Caco-2 (cell line): ENCODE measurements at regions of chr4 and their contacts with region 1.

Region 1: DNA sequence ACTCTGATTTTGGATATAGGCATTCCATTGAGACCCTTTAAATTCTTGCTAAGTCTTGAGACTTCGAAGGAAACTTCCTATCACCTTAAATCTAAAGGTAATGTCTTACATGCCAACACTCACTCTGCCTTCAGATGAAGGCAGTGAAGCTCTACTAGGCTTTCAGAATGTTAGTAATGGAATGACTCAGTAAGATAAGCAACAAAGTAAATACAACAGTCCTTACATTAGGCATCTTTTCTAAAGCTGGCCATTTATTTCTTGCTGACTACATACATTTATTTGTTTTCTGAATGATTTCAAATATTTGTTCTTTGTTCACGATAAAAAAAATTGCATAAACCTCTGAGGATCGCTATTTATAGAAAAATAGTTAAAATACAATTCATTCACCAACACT is 43.5 kb downstream of the ASIC5 start:
- DNase-seq: no peak
- H3K4me3 ChIP-seq: no peak overlapping the region
- H3K4me3 Mint-ChIP-seq: peak overlapping the region; percentile 23
- H3K27ac Mint-ChIP-seq: peak overlapping the region; percentile 64
- H3K4me1 ChIP-seq: peaks cover 40% of the 10 kb centered on the region
- H3K4me1 Mint-ChIP-seq: peaks cover 49% of the 10 kb centered on the region
- H3K27me3 ChIP-seq: no peaks in the 10 kb centered on the region
- H3K27me3 Mint-ChIP-seq: no peaks in the 10 kb centered on the region
- CTCF ChIP-seq: no peak

Region 2: GRCh38 chr4:155667568-155668511 is 154.7 kb before region 1 on chr4:
- CTCF ChIA-PET with region 1: no interaction called
- POLR2A ChIA-PET with region 1: no interaction called
- intact Hi-C with region 1: no loop called
- DNase-seq: no peak
- H3K4me3 ChIP-seq: no peak overlapping the region
- H3K4me3 Mint-ChIP-seq: no peak overlapping the region
- H3K27ac Mint-ChIP-seq: no peak overlapping the region
- H3K4me1 ChIP-seq: peaks cover 19% of the 10 kb centered on the region
- H3K4me1 Mint-ChIP-seq: peaks cover 18% of the 10 kb centered on the region
- H3K27me3 ChIP-seq: no peaks in the 10 kb centered on the region
- H3K27me3 Mint-ChIP-seq: no peaks in the 10 kb centered on the region
- CTCF ChIP-seq: no peak

Region 3: GRCh38 chr4:155809835-155810234 is 12.7 kb before region 1 on chr4:
- CTCF ChIA-PET with region 1: no interaction called
- POLR2A ChIA-PET with region 1: no interaction called
- intact Hi-C with region 1: loop called (anchors 1 kb)
- DNase-seq: peak in 1 of 2 experiments; percentile 61
- H3K4me3 ChIP-seq: no peak overlapping the region
- H3K4me3 Mint-ChIP-seq: no peak overlapping the region
- H3K27ac Mint-ChIP-seq: no peak overlapping the region
- H3K4me1 ChIP-seq: no peaks in the 10 kb centered on the region
- H3K4me1 Mint-ChIP-seq: no peaks in the 10 kb centered on the region
- H3K27me3 ChIP-seq: no peaks in the 10 kb centered on the region
- H3K27me3 Mint-ChIP-seq: no peaks in the 10 kb centered on the region
- CTCF ChIP-seq: peak; percentile 48 to 61